ENCODE measurements at regions of chr9 and their contacts with region 1.

Region 1: DNA sequence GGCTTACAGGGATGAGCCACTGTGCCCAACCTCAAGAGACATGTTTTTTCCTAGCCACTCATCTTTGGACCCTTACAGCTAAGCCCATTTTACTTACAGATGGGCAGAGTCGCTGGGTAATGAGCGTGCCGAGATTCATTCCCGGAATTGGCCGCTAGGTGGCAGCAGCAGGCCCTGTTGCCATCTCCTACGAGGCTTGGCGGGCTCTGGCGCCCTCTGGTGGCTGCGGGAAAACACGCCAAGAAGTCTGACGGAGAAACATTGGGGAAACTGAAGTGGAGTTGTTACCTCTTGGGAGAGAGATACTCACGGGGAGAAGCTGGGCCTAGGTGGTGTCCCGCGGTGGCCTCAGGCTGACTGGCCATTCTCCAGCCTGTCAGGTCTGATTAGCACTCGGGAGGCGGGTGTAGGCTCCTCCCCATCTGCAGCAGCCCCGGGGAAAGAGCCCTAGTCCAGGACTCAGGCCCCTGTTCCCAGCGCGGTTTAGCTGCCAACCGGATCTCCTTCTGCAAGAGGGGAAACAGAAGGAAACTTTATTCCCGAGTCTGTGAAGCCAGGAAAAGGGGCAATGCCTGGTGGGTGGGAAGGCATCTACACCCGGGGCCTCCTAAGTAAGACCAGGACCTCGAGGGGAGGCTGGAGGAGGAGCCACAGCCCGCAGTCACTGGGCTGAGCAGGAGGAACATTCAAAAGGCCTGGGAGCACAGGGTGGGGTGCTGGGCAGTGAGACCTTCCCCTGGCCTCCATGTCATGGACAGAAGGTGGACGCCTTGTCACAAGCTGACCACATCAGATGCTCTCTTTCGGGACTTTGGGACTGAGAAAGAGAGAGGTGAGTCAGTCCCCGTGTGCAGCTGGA is 9.7 kb downstream of the PTGES2 start:
- DNase-seq: peak; percentile 98
- ATAC-seq: peak; percentile 87
- H3K4me3 Mint-ChIP-seq: peak overlapping the region; percentile 50
- H3K27ac Mint-ChIP-seq: 0 out of 2 replicates have a peak overlapping the region, but pooled peaks have one; percentile 63
- H3K4me1 Mint-ChIP-seq: peaks cover 10% of the 10 kb centered on the region
- H3K27me3 Mint-ChIP-seq: no peaks in the 10 kb centered on the region
- CTCF ChIP-seq: peak; percentile 100

Region 2: DNA sequence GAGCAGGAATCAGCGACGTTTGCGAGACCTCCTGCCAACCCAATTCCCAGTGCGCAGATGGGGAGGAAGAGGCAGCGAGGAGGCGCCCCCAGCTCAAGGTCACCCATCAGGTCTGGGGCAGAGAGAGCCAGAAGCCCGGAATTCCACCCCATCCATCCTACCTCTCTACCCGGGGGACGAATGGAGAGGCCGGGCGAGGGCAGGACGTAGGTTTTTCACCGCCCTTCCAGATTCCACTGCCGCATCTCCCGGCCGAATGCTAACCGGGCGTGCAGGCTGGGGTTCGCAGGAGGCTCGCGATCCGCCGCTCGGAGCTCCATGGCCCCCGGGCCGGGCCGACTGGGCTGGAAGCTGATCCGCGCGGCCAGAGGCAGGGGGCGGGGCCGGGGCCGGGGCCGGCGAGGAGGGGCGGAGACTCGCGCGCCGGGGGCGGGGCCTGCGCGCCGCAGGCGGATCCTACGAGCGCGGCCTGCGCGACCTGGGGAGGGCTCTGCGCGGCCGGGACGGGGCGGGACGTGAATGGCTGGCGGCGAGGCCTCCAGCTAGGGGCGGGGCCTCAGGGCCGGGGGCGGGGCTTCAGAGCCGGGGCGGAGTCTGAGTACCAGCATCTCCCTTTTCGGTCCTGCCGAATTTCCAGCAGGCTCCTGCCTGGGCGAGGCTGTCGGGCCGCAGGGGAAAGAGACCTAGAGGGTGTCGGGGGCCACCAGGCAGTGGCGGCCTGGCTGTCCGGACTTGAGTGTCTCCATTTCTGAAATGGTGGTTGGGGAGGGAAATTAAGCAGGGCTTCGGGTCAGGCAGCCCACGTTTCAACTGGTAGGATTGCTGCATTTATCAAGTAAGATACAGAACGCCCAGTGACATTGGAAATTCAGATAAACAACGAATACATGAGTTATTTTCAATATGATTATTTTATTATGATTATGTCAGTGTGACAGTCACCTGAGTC is 200.9 kb before region 1 on chr9 and contains the start of gene ST6GALNAC4:
- CTCF ChIA-PET with region 1: interaction called, 10 read pairs
- POLR2A ChIA-PET with region 1: no interaction called
- DNase-seq: peak; percentile 96
- ATAC-seq: peak; percentile 92
- H3K4me3 Mint-ChIP-seq: peak within 1 kb of the TSS; percentile 74
- H3K27ac Mint-ChIP-seq: peak within 1 kb of the TSS; percentile 60; the same call in 1 of the 2 replicates
- H3K4me1 Mint-ChIP-seq: peaks cover 19% of the 10 kb centered on the region
- H3K27me3 Mint-ChIP-seq: peaks cover 7% of the 10 kb centered on the region
- CTCF ChIP-seq: no peak
- total RNA-seq, gene ST6GALNAC4: 25.1 to 25.7 TPM (median 25.4 TPM) in 3 replicates

Region 3: DNA sequence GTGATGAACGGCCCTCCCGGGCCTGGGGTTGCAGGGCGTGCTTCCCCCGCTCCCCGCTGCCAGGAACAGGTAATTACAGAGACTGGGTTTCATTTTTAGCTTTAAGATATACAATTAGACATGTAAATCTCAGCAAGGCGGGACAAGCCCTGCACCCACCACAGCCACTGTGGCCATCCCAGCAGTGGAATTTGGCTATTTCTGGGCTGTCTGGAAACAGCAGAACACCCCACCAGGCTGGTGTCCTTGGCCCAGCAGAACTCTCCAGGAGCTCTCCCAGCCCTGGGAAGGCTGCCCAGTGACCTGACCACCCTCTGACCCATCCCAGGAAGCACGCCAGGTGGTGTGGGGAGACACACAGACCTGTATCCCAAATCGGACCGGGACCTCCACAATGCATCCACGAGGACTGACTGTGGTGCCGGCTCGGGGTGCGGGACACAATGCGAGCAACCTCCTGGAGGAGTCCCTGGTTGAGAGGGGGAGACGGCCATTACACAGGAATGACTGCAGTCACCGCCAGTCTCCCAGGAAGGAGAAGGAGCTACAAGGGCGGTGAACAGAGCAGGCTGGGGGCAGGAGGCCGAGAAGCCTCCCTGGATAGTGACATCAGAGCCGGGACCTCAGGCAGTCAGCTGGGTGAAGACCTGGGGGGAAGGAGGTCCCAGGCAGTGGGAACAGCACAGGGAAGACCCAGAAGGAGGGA is 154.3 kb before region 1 on chr9:
- CTCF ChIA-PET with region 1: interaction called, 17 read pairs
- POLR2A ChIA-PET with region 1: no interaction called
- DNase-seq: no peak
- ATAC-seq: no peak
- H3K4me3 Mint-ChIP-seq: no peak overlapping the region
- H3K27ac Mint-ChIP-seq: peak overlapping the region; percentile 53; the same call in 1 of the 2 replicates
- H3K4me1 Mint-ChIP-seq: peaks cover 71% of the 10 kb centered on the region
- H3K27me3 Mint-ChIP-seq: no peaks in the 10 kb centered on the region
- CTCF ChIP-seq: no peak

Region 4: DNA sequence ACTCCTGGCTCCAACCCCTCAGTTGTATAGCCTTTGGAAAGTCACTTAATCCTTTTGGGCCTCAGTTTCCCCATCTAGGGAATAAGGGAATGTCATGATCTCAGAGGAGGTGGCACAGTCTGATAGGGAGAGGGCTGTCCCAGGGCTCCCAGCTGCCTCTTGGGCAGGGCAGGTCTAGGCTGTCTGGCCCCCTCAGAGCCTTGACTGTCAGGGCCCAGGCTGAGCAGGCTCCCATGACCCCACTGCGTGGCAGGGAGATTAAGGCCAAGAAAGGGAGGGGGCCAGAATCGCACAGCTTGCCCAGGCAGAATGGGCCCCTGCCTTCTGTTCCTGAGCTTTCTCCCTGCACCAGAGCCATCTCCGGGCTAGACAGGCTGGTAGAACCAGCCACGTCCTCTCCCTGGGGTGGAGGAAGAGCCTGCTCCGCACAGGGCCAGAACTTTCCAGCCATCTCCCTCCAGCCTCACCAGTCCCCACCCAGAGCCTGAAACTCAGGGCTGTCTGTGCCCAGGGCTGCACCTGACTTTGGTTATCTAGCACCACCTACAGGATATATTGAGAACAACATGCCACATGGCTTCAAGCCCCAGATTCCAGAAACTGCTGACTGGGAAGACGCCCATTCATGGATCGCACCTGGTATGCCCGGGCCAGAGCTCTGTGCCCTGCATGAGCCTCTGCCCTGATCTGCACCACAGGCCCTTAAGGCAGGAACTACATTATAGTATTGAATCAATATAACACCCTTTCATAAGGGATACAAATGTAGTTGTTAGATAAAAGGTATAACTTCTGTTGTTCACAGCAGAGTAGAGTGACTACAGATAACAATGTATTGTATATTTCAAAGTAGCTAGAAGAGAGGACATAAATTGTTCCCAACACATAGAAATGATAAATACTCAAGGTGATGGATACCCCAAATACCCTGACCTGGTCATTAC is 82.7 kb before region 1 on chr9:
- CTCF ChIA-PET with region 1: interaction called, 31 read pairs
- POLR2A ChIA-PET with region 1: no interaction called
- DNase-seq: peak; percentile 80
- ATAC-seq: peak; percentile 98
- H3K4me3 Mint-ChIP-seq: no peak overlapping the region
- H3K27ac Mint-ChIP-seq: peak overlapping the region; percentile 6
- H3K4me1 Mint-ChIP-seq: 0 out of 2 replicates have a peak, but pooled peaks cover 2% of the 10 kb centered on the region
- H3K27me3 Mint-ChIP-seq: no peaks in the 10 kb centered on the region
- CTCF ChIP-seq: peak; percentile 93

Region 5: GRCh38 chr9:128103589-128103962 is 14.3 kb before region 1 on chr9:
- CTCF ChIA-PET with region 1: interaction called, 73 read pairs
- POLR2A ChIA-PET with region 1: interaction called, 4 read pairs
- DNase-seq: no peak
- ATAC-seq: peak; percentile 34
- H3K4me3 Mint-ChIP-seq: no peak overlapping the region
- H3K27ac Mint-ChIP-seq: peak overlapping the region; percentile 76; the same call in 1 of the 2 replicates
- H3K4me1 Mint-ChIP-seq: peaks cover 35% of the 10 kb centered on the region
- H3K27me3 Mint-ChIP-seq: no peaks in the 10 kb centered on the region
- CTCF ChIP-seq: 0 out of 2 replicates have a peak, but pooled peaks have one; percentile 19

Region 6: DNA sequence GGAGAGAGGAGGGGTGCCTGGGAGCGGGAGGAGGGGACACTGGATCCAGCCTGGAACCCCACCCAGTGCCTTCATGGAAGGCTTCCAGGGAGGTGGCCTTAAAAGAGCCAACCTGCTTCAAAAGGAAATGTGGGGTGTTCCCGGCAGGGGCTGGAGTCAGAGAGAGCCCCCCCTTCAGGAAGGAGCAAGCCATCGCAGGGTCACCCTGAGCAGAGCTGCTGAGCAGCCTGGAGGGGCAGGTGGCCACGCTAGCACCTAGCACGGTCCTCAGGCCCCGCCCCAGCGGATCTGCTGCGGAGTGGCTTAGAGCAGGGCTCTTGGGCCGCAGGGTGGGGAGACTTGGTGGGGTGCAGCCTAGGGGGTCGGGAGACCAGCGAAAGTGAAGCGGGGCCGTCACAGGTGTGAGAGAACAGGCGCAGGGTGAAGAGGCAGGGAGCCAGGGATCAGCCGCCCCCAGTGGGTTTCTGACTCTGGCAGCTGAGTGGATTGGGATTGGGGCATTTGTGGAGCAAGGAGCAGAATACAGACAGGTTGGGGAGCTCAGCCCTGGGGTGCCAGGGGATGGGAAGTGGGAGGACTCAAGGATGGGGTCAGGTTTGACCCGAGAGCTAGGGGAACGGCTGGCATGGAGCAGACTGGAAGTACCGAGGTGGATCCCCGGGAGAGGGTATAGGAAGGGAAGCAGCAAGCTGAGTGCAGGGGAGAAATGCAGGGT is 32.9 kb after region 1 on chr9:
- CTCF ChIA-PET with region 1: interaction called, 36 read pairs
- POLR2A ChIA-PET with region 1: no interaction called
- DNase-seq: peak; percentile 82
- ATAC-seq: peak; percentile 95
- H3K4me3 Mint-ChIP-seq: peak overlapping the region; percentile 25; the same call in 1 of the 2 replicates
- H3K27ac Mint-ChIP-seq: no peak overlapping the region
- H3K4me1 Mint-ChIP-seq: peaks cover 12% of the 10 kb centered on the region
- H3K27me3 Mint-ChIP-seq: peaks cover 7% of the 10 kb centered on the region; the same call in 1 of the 2 replicates
- CTCF ChIP-seq: peak; percentile 59

Region 7: DNA sequence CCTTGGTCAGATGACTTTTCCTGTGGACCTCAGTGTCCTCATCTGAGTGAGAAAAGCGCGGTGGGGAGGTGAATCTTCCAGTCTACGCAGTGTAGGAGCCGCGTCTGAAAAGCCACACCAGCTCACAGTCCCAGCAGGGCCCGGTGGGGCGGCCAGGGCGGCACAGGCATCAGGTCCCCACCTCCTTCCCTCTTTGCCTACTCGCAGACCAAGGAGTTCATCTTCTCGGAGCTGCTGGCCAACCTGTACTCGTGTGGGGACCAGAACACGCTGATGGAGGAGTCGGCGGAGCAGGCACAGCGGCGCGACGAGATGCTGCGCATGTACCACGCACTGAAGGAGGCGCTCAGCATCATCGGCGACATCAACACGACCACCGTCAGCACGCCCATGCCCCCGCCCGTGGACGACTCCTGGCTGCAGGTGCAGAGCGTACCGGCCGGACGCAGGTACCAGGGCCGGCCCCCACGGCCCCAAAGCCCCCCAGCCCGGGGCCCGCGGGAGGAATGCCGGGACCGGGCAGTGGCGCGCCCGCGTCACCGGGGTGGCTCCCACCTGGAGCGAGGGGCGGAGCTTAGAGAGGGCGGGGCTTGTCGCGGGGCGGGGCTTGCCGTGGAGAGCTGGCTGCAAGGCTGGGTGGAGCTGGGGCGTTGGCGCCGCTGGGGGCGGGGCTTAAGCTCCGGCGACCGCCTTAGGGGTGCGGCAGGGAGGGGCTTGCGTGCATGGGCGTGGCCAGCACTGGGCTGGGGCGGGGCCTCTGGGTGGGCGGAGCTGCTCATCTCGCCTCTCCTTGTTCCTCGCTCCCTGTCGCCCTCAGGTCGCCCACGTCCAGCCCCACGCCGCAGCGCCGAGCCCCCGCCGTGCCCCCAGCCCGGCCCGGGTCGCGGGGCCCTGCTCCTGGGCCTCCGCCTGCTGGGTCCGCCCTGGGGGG is 132.3 kb after region 1 on chr9:
- CTCF ChIA-PET with region 1: interaction called, 12 read pairs
- POLR2A ChIA-PET with region 1: no interaction called
- DNase-seq: peak; percentile 98
- ATAC-seq: peak; percentile 91
- H3K4me3 Mint-ChIP-seq: peak overlapping the region; percentile 85
- H3K27ac Mint-ChIP-seq: peak overlapping the region; percentile 83
- H3K4me1 Mint-ChIP-seq: peaks cover 41% of the 10 kb centered on the region
- H3K27me3 Mint-ChIP-seq: peaks cover 9% of the 10 kb centered on the region
- CTCF ChIP-seq: no peak